ENCODE measurements at regions of chr2 and their contacts with region 1.

Region 1: DNA sequence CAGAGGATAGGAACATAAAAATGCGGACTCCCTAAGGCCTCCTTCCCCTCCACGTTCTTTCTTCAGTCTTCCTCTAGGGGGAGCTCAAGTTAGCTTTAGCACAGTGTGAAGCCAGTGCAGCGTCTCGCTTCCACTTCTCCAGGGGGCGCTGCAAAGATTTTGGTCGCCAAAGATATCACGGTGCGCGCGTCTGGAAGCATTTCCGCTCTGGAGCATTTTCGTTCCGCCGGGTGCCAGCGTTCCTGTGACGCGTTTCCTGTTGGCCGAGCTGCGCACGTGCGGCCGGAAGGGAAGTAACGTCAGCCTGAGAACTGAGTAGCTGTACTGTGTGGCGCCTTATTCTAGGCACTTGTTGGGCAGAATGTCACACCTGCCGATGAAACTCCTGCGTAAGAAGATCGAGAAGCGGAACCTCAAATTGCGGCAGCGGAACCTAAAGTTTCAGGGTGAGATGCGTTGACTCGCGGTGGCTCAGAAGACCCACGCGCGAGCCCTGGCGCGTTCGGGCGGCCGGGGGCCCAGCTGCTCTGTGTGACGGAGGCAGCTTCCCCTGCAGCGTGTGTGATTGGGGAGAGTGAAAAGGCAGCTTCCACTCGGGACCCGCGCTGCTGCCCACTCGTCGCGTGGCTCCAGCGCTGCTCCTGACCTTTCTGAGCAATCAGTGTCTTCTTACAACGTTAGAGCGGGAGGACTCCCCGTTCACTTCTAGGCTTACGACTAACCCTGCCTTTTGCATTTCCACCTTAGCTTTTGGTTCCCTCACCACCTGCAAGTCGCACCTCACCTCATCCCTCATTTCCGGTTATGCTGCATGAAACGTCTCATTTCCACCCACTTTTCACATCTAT is at the start of gene DDX18:
- DNase-seq: peak; percentile 98
- H3K4me3 Mint-ChIP-seq: peak within 1 kb of the TSS; percentile 92
- H3K27ac Mint-ChIP-seq: peak within 1 kb of the TSS; percentile 95
- H3K4me1 Mint-ChIP-seq: peaks cover 35% of the 10 kb centered on the region
- H3K27me3 Mint-ChIP-seq: no peaks in the 10 kb centered on the region
- total RNA-seq, gene DDX18: 118 to 124 TPM

Region 2: DNA sequence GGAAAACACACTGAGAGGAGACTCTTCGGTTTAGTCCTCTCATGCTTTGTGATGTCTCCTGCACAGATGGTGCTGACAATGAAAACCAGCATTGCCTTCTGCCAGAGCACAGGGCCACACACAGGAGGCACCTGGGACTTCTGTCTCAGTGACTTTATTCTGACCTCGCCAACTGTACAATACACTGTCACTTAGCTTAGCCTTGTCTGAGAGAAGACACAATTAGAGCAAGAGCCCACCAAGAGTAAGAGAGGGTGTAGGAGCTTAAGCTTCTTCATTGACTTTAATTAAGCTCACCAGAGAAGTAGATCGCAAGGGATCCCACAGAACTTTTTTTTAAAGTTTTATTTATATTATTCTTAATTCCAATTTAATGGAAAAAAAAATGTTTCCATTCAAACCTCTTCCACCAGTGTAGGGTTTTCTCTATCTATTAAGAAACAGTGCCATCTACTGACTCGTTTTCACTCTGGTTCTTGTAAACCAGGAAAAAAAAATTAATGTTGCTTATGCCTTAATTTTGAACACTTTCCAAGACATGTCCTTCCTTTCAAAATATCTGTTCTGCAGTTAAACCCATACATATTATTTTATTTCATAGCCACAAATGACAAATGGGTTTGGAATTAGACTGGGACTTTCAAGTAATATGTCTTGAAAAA is 42.5 kb before region 1 on chr2:
- CTCF ChIA-PET with region 1: no interaction called
- POLR2A ChIA-PET with region 1: no interaction called
- intact Hi-C with region 1: no loop called
- DNase-seq: no peak
- H3K4me3 Mint-ChIP-seq: no peak overlapping the region
- H3K27ac Mint-ChIP-seq: no peak overlapping the region
- H3K4me1 Mint-ChIP-seq: no peaks in the 10 kb centered on the region
- H3K27me3 Mint-ChIP-seq: peaks cover 17% of the 10 kb centered on the region

Region 3: GRCh38 chr2:117801826-117802225 is 12.8 kb before region 1 on chr2:
- CTCF ChIA-PET with region 1: interaction called, 13 read pairs
- POLR2A ChIA-PET with region 1: no interaction called
- intact Hi-C with region 1: no loop called
- DNase-seq: no peak
- H3K4me3 Mint-ChIP-seq: no peak overlapping the region
- H3K27ac Mint-ChIP-seq: no peak overlapping the region
- H3K4me1 Mint-ChIP-seq: no peaks in the 10 kb centered on the region
- H3K27me3 Mint-ChIP-seq: peaks cover 29% of the 10 kb centered on the region

Region 4: GRCh38 chr2:118003396-118003824 is 188.8 kb after region 1 on chr2:
- CTCF ChIA-PET with region 1: interaction called, 61 read pairs
- POLR2A ChIA-PET with region 1: interaction called, 7 read pairs
- intact Hi-C with region 1: loop called (anchors 1 kb)
- DNase-seq: peak; percentile 43
- H3K4me3 Mint-ChIP-seq: no peak overlapping the region
- H3K27ac Mint-ChIP-seq: peak overlapping the region; percentile 43
- H3K4me1 Mint-ChIP-seq: peaks cover 21% of the 10 kb centered on the region
- H3K27me3 Mint-ChIP-seq: no peaks in the 10 kb centered on the region

Region 5: DNA sequence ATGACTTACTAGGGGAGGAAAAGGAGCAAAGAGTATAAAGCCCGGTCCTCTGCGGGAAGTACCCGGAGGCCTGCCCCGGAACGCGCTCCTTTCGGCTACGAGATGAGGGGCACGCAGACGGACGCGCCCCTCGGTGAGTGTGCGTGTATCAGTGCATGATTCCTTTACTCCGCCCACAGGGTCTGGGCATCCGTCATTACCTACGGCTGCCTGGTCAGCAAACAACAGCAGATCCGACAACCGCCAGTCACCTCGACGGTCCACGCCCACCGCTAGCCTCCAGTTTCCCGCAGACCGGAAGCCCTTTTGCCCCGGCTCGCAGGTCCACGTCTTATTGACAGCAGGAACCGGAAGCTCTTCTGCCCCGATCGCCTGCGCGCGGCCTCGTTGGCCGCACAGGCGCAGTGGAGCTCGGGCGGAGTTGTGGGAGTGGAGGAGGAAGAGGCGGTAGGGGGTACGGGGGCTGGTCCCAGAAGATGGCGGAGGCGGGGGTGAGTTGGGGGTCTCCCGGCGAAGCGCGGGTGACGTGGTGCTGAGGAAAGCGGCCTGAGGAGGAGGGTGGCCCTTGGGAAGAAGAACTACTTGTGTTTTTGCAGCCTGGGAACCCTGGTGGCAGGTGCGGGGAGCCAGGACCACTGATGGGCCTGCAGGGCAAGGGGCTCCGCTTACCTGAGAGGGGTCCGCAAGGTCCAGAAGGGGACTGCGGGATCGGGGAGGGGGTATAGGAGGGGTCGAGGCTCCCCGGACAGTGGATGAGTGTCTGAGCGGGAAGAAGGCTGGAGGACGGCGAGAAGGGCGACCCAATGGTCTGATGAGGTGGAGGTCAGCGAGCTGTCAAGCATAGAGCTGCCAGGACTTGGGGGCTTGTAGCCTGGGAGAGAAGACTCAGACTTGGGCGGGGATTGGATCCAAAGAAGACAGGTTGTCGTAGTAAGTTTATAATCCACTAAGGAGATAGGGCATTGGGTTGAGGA is 273.7 kb after region 1 on chr2 and contains the start of gene INSIG2:
- CTCF ChIA-PET with region 1: interaction called, 6 read pairs
- POLR2A ChIA-PET with region 1: no interaction called
- intact Hi-C with region 1: loop called (anchors 1 kb)
- DNase-seq: peak; percentile 96
- H3K4me3 Mint-ChIP-seq: peak within 1 kb of the TSS; percentile 89
- H3K27ac Mint-ChIP-seq: peak within 1 kb of the TSS; percentile 85
- H3K4me1 Mint-ChIP-seq: peaks cover 21% of the 10 kb centered on the region
- H3K27me3 Mint-ChIP-seq: peaks cover 2% of the 10 kb centered on the region
- total RNA-seq, gene INSIG2: 35.0 to 40.2 TPM

Region 6: GRCh38 chr2:118309946-118310680 is 495.5 kb after region 1 on chr2:
- CTCF ChIA-PET with region 1: interaction called, 3 read pairs
- POLR2A ChIA-PET with region 1: no interaction called
- intact Hi-C with region 1: loop called (anchors 10 kb)
- DNase-seq: peak; percentile 78
- H3K4me3 Mint-ChIP-seq: peak overlapping the region; percentile 79
- H3K27ac Mint-ChIP-seq: peak overlapping the region; percentile 88
- H3K4me1 Mint-ChIP-seq: peaks cover 8% of the 10 kb centered on the region
- H3K27me3 Mint-ChIP-seq: peaks cover 2% of the 10 kb centered on the region